ENCODE measurements at regions of chr19 and their contacts with region 1.

Region 1: GRCh38 chr19:11766597-11767591 is at the start of gene ZNF441:
- DNase-seq: peak; percentile 99
- ATAC-seq: peak; percentile 100
- total RNA-seq, gene ZNF441: 4.2 TPM

Region 2: GRCh38 chr19:11738746-11739620 is 27.9 kb before region 1 on chr19 and contains the start of gene ZNF823:
- intact Hi-C with region 1: loop called (anchors 1 kb)
- DNase-seq: peak; percentile 97
- ATAC-seq: peak; percentile 99
- total RNA-seq, gene ZNF823: 4.2 TPM

Region 3: DNA sequence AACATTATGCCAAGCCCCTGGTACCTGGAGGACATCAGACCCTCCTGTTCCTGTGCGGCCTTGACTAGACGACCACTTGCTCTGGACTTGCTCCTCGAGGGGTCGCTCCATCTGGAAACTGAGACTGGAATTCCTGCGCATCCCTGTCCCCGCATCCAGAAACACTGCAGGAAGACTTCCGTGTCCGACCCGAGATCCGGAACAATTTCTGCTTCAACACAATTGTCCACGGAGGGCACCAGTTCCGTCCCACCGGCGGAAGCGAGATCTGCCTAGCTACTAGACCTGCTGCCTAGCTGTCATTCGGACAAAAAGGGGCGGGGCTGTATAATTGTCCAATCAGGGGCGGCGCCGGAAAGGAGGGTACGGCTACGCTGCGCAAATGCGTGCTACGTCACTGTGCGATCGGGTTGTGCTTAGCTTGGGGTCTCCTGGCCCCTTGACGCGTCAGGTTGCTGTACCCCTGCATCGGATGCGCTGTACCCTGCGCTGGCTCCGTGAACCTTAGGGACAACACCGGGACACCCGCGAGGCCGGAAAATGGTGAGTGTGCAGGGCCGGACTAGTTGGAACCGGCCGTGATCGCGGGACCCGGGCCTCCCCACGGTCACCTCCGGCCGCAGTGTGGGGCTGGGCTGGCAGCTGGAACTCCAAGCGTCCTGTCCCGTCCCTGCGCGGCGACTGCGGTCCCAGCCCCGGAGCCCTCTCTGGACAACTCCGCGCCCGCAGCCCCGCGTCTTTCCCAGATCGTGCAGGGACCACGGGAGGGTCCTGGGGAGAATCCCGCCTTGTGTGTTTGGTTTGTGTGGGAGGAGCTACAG is 843.9 kb after region 1 on chr19 and contains the starts of genes ZNF490 and ZNF791:
- intact Hi-C with region 1: loop called (anchors 10 kb)
- DNase-seq: peak; percentile 99
- ATAC-seq: peak; percentile 99
- total RNA-seq, gene ZNF490: 5.1 TPM
- total RNA-seq, gene ZNF791: 14.4 TPM